Activated naive CD4-positive, alpha-beta T cell treated with anti-CD3 and anti-CD28 coated beads for 36 hours (primary cell): ENCODE measurements at regions of chr1 and their contacts with region 1.

Region 1: DNA sequence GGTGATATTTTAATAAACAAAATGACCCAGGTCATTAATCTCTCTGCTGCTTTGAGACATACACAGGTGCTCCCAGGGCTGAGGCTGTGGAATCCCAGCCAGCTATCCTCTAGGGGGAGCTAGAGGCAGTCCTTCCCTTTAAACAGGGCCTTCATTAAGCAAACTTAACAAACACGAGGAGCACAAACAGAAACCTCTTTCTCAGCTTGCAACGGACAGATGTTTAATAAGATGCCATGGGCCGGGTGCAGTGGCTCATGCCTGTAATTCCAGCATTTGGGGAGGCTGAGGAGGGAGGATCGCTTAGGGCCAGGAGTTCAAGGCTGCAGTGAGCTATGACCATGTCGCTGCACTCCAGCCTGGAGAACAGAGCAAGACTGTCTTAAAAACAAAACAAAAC is 106.7 kb downstream of the HIVEP3 start:
- DNase-seq: peak; percentile 85
- H3K4me3 Mint-ChIP-seq: no peak overlapping the region
- H3K27ac Mint-ChIP-seq: no peak overlapping the region
- H3K4me1 Mint-ChIP-seq: peaks cover 43% of the 10 kb centered on the region
- H3K27me3 Mint-ChIP-seq: no peaks in the 10 kb centered on the region

Region 2: DNA sequence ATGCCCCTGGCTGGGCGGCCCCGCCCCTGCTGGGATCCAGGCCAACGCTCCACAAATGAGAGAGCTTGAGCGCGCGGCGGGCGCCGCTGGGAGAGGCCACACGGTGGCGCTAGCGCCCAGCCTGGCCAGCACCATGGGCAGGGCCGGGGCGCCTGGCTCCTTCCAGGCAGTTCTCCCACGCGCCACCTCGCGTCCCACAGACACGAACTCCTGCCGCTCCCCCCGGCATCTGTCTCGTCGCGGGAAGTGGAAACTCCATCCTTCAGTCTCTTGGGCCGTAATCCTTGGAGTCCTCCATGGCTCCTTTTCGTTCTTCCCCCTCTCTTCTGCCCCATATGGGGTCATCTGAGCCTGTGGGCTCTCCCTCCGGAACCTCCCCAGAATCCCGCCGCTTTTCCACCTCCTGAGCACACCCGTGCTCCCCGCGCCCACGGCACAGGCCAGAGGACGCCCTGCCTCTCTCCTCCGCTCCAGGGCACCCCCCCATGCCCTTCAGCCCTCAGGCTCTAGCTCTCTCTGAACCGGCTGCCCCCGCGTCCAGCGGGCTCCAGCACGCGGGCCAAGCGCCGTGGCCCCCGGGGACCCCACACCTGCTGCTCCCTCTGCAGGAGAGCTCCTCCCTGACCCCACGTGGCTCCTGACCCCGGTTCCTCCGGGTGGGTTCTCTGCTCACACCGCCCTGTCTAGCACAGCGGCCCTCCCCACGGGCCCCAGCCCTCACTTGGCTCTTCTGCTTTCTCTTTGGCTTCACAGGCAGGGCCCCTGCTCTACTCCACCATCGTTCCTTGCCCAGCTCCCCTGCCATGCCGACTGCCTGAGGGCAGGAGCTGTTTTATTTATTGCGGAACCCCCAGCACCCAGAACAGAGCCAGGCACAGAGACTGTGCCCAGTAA is 295.6 kb before region 1 on chr1:
- CTCF ChIA-PET with region 1: interaction called, 3 read pairs
- intact Hi-C with region 1: loop called (anchors 2 kb)
- DNase-seq: peak; percentile 76
- H3K4me3 Mint-ChIP-seq: no peak overlapping the region
- H3K27ac Mint-ChIP-seq: no peak overlapping the region
- H3K4me1 Mint-ChIP-seq: peaks cover 9% of the 10 kb centered on the region
- H3K27me3 Mint-ChIP-seq: no peaks in the 10 kb centered on the region

Region 3: DNA sequence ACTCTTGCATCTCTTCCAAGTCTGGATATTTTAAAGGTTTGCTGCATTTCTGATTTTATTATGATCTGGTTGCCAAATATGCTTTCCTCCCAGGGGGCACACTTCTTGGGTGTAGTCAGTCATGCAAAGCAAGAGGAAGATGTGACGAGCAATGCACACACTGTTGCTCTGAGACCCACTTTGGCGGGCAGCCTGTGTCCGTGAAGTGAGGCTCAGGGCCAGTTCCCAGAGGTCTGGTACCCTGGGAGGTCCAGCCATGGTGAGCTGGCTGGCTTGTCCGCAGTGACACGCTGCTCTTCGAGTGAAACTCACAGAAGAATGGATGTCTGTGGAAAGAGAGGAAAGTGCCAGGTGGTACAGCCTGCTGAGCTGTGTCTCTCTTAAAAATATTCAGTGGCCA is 274.8 kb before region 1 on chr1:
- CTCF ChIA-PET with region 1: no interaction called
- intact Hi-C with region 1: no loop called
- DNase-seq: no peak
- H3K4me3 Mint-ChIP-seq: no peak overlapping the region
- H3K27ac Mint-ChIP-seq: no peak overlapping the region
- H3K4me1 Mint-ChIP-seq: no peaks in the 10 kb centered on the region
- H3K27me3 Mint-ChIP-seq: no peaks in the 10 kb centered on the region

Region 4: DNA sequence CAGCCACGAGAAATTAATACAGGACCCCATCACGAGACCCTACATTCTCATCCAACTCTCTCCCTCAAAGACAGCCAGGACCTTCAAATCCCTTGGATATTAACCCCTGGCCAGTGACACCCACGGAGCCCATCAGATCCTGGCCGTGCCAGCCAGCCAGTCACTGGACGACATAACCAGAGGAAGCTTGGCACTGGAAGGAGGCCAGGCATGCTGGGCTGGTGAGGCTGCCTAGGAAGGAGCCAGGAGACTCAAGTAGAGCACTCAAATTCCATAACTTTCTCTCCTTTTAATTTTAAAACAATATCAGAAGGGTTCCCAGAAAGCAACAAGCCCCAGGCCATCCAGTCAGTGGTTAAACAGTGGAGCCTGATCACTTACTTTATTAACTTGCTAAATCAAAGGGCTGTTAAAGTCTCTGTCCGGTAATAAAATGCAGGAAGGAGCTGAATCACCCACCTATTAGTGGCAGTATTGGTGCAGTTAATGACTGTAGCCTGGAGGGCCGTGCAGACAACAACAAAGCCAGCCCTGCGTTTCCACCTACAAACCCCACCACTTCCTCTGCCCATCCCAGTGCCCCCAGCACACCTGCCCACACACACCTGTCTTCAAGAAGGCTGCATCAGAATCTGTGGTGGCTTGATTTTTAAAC is 28.7 kb after region 1 on chr1:
- CTCF ChIA-PET with region 1: no interaction called
- intact Hi-C with region 1: no loop called
- DNase-seq: no peak
- H3K4me3 Mint-ChIP-seq: no peak overlapping the region
- H3K27ac Mint-ChIP-seq: no peak overlapping the region
- H3K4me1 Mint-ChIP-seq: peaks cover 21% of the 10 kb centered on the region
- H3K27me3 Mint-ChIP-seq: no peaks in the 10 kb centered on the region

Region 5: GRCh38 chr1:41862384-41863174 is 50.5 kb after region 1 on chr1:
- CTCF ChIA-PET with region 1: interaction called, 5 read pairs
- intact Hi-C with region 1: loop called (anchors 1 kb)
- DNase-seq: peak; percentile 85
- H3K4me3 Mint-ChIP-seq: peak overlapping the region; percentile 41
- H3K27ac Mint-ChIP-seq: peak overlapping the region; percentile 88
- H3K4me1 Mint-ChIP-seq: peaks cover 44% of the 10 kb centered on the region
- H3K27me3 Mint-ChIP-seq: no peaks in the 10 kb centered on the region

Region 6: GRCh38 chr1:41919764-41920397 is 107.8 kb after region 1 on chr1:
- CTCF ChIA-PET with region 1: no interaction called
- intact Hi-C with region 1: loop called (anchors 1 kb)
- DNase-seq: peak; percentile 91
- H3K4me3 Mint-ChIP-seq: peak overlapping the region; percentile 89
- H3K27ac Mint-ChIP-seq: peak overlapping the region; percentile 91
- H3K4me1 Mint-ChIP-seq: peaks cover 49% of the 10 kb centered on the region
- H3K27me3 Mint-ChIP-seq: no peaks in the 10 kb centered on the region

Region 7: DNA sequence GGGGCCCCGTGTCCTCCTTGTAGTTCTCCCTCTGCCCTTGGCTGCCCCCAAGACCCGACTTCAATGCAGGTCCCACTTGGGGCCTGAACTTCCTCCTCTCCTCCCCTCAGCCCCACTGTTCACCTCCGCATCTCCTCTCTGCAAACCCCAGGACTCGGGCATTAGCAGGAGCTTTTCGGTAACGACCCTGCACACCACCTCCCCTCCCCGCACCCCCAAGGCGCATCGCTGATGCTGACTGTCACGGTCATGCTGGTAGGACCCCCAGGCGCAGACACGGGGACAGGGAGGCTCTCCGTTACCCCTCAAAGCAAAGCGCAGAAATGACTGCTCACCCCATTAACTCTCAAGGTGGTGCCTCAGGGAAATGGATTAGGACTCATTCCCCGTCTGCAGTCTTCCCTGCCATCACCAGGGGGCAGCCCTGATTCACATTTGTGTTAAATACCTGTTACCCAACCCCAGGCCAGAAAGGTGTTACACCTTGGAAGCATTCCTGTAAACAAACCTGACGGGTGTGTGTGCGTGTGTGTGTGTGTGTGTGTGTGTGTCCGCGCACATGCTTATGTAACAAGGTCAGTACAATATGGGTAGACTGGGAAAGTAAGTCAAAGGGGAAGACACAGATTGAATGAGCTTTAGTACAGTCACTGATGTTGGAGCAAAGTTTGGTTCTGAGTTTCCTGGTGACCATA is 334.7 kb after region 1 on chr1:
- CTCF ChIA-PET with region 1: no interaction called
- intact Hi-C with region 1: loop called (anchors 5 kb)
- DNase-seq: peak; percentile 87
- H3K4me3 Mint-ChIP-seq: no peak overlapping the region
- H3K27ac Mint-ChIP-seq: no peak overlapping the region
- H3K4me1 Mint-ChIP-seq: peaks cover 7% of the 10 kb centered on the region
- H3K27me3 Mint-ChIP-seq: peaks cover 13% of the 10 kb centered on the region